Activated CD4-positive, alpha-beta memory T cell treated with anti-CD3 and anti-CD28 coated beads, Interleukin-2, amount 10 ng/mL, durations not matched to agents 7 days and 5 days (primary cell): ENCODE measurements at regions of chr1 and their contacts with region 1.

Region 1: GRCh38 chr1:54488779-54489626 is 59.0 kb upstream of the ACOT11 start:
- DNase-seq: peak; percentile 70
- H3K4me3 Mint-ChIP-seq: peak overlapping the region; percentile 81
- H3K27ac Mint-ChIP-seq: peak overlapping the region; percentile 61
- H3K4me1 Mint-ChIP-seq: peaks cover 47% of the 10 kb centered on the region
- H3K27me3 Mint-ChIP-seq: peaks cover 41% of the 10 kb centered on the region

Region 2: GRCh38 chr1:54070171-54070837 is 418.7 kb before region 1 on chr1:
- CTCF ChIA-PET with region 1: interaction called, 18 read pairs
- POLR2A ChIA-PET with region 1: no interaction called
- DNase-seq: no peak
- H3K4me3 Mint-ChIP-seq: no peak overlapping the region
- H3K27ac Mint-ChIP-seq: no peak overlapping the region
- H3K4me1 Mint-ChIP-seq: no peaks in the 10 kb centered on the region
- H3K27me3 Mint-ChIP-seq: no peaks in the 10 kb centered on the region

Region 3: GRCh38 chr1:54121482-54122134 is 367.4 kb before region 1 on chr1:
- CTCF ChIA-PET with region 1: interaction called, 13 read pairs
- POLR2A ChIA-PET with region 1: interaction called, 4 read pairs
- DNase-seq: peak; percentile 67
- H3K4me3 Mint-ChIP-seq: no peak overlapping the region
- H3K27ac Mint-ChIP-seq: no peak overlapping the region
- H3K4me1 Mint-ChIP-seq: peaks cover 4% of the 10 kb centered on the region
- H3K27me3 Mint-ChIP-seq: peaks cover 6% of the 10 kb centered on the region

Region 4: DNA sequence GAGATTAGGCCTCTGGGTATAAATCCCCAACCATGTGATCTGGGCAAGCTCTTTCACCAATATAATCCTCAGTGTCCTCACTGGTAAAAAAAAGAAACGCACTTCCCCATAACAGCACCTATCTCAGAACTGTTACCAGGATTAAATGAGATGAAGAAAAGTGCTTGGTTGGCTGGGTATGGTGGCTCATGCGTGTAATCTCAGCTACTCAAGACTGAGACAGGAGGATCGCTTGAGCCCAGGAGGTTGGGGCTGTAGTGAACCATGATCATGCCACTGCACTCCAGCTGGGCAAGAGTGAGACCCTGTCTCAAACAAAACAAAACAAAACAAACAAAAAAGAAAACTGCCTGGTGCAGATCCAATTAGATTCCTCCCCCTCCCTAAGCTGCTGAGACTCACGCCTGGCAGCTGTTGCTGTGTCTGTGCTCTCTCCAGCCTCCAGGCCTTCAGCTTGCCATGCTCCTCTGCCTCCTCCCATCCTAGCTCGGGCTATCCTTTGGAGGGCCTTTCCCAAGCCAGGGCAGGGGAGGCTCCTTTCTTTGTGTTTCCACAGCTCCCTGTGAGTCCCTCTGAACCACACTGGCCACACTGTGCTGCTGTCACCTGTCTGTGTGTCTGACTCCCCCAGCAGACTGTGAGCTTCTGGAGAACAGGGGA is 308.2 kb before region 1 on chr1:
- CTCF ChIA-PET with region 1: interaction called, 21 read pairs
- POLR2A ChIA-PET with region 1: no interaction called
- DNase-seq: no peak
- H3K4me3 Mint-ChIP-seq: no peak overlapping the region
- H3K27ac Mint-ChIP-seq: no peak overlapping the region
- H3K4me1 Mint-ChIP-seq: no peaks in the 10 kb centered on the region
- H3K27me3 Mint-ChIP-seq: no peaks in the 10 kb centered on the region

Region 5: DNA sequence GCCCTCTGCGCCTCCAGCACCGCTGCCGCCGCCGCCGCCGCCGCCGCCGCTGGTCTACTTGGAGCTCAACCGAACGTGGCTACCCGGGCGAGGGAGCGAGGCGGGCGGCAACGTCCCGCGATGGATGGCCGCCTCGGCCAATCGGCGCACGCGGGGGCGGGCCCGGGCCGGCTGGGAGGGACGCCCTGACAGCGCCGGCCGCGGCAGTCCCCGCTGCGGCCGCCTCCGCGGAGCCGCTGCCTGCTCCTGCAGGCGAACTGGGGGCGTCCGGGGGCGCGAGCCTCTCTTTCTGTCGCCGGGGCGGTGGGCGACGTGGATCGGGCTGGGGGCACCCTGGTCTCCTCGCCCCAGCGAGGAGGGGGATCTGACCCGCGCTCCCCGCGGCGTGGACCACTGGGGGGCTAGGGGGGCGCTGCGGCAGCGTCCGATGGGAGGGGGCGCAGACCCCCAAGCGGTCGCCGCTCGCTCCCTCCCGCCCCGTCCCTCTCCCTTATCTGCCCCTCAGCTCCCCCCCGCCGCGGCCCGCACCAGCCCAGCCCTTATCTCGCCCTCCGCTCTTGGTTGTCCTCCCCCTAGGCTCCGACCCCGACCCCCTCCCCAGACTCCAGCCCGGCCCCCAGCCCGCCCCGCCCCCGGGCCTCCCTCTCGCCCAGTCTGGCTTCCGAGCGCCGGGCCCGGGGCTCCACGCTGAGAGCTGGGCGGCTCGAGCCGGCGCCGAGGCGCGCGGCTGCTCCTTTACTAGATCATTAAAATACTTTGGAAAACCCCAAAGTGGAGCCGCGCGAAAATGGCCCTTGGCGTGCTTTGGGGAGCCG is 82.5 kb before region 1 on chr1 and contains the start of gene SSBP3:
- CTCF ChIA-PET with region 1: interaction called, 104 read pairs
- POLR2A ChIA-PET with region 1: interaction called, 60 read pairs
- DNase-seq: peak; percentile 94
- H3K4me3 Mint-ChIP-seq: peak within 1 kb of the TSS; percentile 90
- H3K27ac Mint-ChIP-seq: peak within 1 kb of the TSS; percentile 95
- H3K4me1 Mint-ChIP-seq: peaks cover 66% of the 10 kb centered on the region
- H3K27me3 Mint-ChIP-seq: no peaks in the 10 kb centered on the region
- total RNA-seq, gene SSBP3: 90.0 TPM

Region 6: GRCh38 chr1:54499360-54500106 is 10.5 kb after region 1 on chr1:
- CTCF ChIA-PET with region 1: interaction called, 20 read pairs
- POLR2A ChIA-PET with region 1: no interaction called
- DNase-seq: peak; percentile 39
- H3K4me3 Mint-ChIP-seq: no peak overlapping the region
- H3K27ac Mint-ChIP-seq: no peak overlapping the region
- H3K4me1 Mint-ChIP-seq: peaks cover 9% of the 10 kb centered on the region
- H3K27me3 Mint-ChIP-seq: peaks cover 51% of the 10 kb centered on the region